ENCODE measurements at regions of chr11 and their contacts with region 1.

Region 1: GRCh38 chr11:121839781-121840180 is 276.2 kb downstream of the BLID start:
- DNase-seq: no peak
- H3K4me3 ChIP-seq: no peak overlapping the region
- H3K27ac ChIP-seq: no peak overlapping the region
- H3K4me1 ChIP-seq: no peaks in the 10 kb centered on the region
- H3K27me3 ChIP-seq: no peaks in the 10 kb centered on the region
- CTCF ChIP-seq: no peak

Region 2: DNA sequence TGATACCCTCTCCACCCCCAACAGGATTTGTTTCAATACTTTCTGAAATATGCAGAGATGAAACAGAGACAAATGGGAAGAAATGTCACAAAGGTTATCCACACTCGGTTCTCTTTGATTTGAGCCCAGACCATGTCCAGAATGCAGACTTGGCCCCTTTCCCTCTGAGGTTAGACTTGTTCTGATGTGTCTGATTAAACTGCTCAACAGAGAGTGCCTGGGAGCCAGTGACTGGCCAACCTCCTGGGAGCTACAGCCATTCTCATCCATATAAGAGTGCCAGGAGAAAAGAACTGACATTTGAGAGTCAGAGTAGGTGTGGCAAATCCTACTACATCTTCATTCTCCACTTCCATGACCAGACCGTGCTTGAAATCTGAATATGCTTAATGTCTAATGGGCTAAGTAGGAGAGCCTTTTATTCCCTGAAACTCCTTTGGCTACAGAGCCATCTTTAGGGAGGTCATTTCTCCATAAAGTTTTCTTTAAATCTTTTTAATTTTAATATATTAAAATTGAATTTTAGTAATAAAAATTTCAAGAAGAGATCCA is 74.8 kb after region 1 on chr11:
- CTCF ChIA-PET with region 1: no interaction called
- dilution Hi-C with region 1: loop called (anchors 5 kb)
- in situ Hi-C with region 1: no loop called
- intact Hi-C with region 1: no loop called
- DNase-seq: no peak
- H3K4me3 ChIP-seq: no peak overlapping the region
- H3K27ac ChIP-seq: no peak overlapping the region
- H3K4me1 ChIP-seq: no peaks in the 10 kb centered on the region
- H3K27me3 ChIP-seq: no peaks in the 10 kb centered on the region
- CTCF ChIP-seq: no peak

Measured in mammary epithelial cell (primary cell).